ENCODE measurements at regions of chrX and their contacts with region 1.

Region 1: DNA sequence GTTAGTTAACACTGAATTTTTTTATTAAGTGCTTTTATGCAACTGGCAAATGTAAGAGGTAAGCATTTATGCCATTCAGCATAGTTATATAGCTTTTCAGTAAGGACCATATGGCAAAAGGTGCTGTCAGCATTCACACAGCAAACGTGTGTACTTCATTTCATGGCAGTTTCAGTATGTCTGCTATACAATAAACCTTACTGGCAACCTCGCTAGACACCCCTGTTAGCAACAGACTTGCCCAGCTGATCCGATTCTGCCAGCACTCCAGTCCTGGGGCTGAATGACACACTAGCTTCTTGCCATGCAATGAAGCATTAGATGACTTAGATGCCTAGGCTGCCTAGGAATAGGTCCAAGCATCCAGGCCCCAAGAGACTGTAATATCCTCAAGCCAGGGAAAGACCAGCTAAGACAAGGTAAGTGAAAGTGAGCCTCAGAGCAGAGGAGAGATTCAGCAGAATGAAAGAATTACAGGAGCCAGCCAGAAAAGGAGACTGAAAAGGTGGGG is 47.3 kb upstream of the DOCK11 start:
- DNase-seq: no peak
- ATAC-seq: no peak
- H3K4me3 Mint-ChIP-seq: no peak overlapping the region
- H3K27ac Mint-ChIP-seq: no peak overlapping the region
- H3K4me1 Mint-ChIP-seq: no peaks in the 10 kb centered on the region
- H3K27me3 Mint-ChIP-seq: no peaks in the 10 kb centered on the region
- CTCF ChIP-seq: no peak

Region 2: DNA sequence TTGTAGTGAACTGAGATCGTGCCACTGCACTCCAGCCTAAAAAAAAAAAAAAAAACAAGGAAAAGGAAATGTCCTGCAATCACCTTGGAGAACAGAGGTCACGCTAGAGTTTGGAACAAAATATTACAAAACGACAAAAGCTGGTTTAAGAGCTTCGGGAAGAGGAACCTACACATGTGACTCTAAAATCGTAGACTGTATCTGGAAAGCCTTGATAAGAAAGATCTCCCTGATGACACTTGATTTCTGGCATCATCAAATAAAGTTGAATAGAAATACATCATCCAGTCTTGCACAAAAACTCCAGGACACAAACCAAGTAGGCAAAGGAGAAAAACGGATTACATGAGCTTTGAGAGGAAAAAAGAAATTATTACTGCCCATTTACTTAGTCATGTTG is 16.2 kb after region 1 on chrX:
- CTCF ChIA-PET with region 1: no interaction called
- POLR2A ChIA-PET with region 1: interaction called, 10 read pairs
- intact Hi-C with region 1: no loop called
- DNase-seq: no peak
- ATAC-seq: no peak
- H3K4me3 Mint-ChIP-seq: no peak overlapping the region
- H3K27ac Mint-ChIP-seq: no peak overlapping the region
- H3K4me1 Mint-ChIP-seq: no peaks in the 10 kb centered on the region
- H3K27me3 Mint-ChIP-seq: no peaks in the 10 kb centered on the region
- CTCF ChIP-seq: no peak

Measured in activated B cell treated with CpG ODN at 0.5 μM for 24 hours (primary cell).